Activated T-helper 2 cell treated with anti-CD3 and anti-CD28 coated beads, Interferon-gamma antibody, Interleukin-2, Interleukin-4, amounts not matched to agents 10 μg/mL and 5 μg/mL and 100 μg/mL, durations not matched to agents 14 hours and 24 hours and 36 hours (primary cell): ENCODE measurements at regions of chr6 and their contacts with region 1.

Region 1: DNA sequence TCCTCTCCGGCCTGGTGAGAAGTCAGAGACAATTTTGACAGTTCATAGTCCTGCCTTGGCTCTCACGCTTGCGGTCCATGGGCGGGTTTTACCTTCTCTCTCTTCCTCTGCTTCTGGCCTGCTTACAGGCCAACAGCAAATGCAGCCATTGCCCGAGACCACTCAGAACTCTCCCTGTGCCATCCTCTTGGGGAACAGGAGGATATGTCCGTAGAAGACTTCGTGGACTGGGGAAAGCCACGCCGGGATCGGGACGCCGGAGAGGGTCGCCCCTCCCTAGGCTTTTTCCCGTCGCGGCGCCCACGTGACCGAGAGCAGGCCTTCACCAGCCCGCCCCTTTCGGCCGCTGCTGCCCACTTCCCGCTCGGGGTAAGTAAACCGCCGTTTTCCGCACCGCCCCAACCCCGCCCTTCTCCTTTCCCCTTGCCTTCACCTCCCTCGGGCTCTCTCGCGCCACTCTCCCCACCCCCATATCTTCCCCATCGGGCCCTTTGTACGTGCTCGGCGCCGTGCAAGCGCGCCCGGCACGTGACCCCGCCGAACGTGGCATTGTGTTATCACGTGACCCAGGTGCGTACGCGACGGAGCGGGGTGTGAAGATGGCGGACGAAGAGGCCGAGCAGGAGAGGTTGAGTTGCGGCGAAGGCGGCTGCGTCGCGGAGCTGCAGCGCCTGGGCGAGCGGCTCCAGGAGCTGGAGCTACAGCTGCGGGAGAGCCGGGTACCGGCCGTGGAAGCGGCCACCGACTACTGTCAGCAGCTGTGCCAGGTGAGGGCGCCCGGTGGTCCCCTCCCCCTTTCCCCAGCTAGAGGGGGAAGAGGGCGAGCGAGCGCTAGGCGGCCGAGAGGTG is at the start of gene ZNF292:
- DNase-seq: peak; percentile 98
- H3K4me3 Mint-ChIP-seq: peak within 1 kb of the TSS; percentile 93
- H3K27ac Mint-ChIP-seq: peak within 1 kb of the TSS; percentile 99
- H3K4me1 Mint-ChIP-seq: peaks cover 41% of the 10 kb centered on the region
- H3K27me3 Mint-ChIP-seq: no peaks in the 10 kb centered on the region
- total RNA-seq, gene ZNF292: 56.2 and 62.7 TPM in 2 replicates

Region 2: GRCh38 chr6:87040729-87041128 is 114.5 kb before region 1 on chr6:
- intact Hi-C with region 1: no loop called
- DNase-seq: no peak
- H3K4me3 Mint-ChIP-seq: no peak overlapping the region
- H3K27ac Mint-ChIP-seq: no peak overlapping the region
- H3K4me1 Mint-ChIP-seq: no peaks in the 10 kb centered on the region
- H3K27me3 Mint-ChIP-seq: no peaks in the 10 kb centered on the region

Region 3: DNA sequence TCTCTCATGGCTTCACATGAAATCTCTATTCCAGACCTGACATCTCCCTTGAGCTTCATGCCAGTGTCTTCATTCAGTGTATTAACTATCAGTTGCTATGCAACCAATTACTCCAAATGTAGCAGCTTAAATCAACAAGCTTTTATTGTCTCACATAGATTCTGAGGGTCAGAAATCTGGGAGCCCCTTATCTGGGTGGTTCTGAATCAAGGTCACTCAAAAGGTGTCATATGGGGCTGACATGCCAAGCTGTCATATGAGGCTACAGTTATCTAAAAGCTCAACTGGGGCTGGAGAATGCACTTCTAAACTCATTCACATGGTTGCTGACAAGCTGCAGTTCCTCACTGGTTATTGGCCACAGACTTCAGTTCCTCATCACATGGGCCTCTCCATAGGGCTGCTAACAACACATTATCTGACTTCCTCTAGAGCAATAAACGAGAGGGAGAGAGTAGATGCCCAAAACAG is 53.0 kb before region 1 on chr6:
- intact Hi-C with region 1: loop called (anchors 1 kb)
- DNase-seq: no peak
- H3K4me3 Mint-ChIP-seq: no peak overlapping the region
- H3K27ac Mint-ChIP-seq: no peak overlapping the region
- H3K4me1 Mint-ChIP-seq: peaks cover 5% of the 10 kb centered on the region
- H3K27me3 Mint-ChIP-seq: peaks cover 39% of the 10 kb centered on the region

Region 4: GRCh38 chr6:87197547-87197946 is 42.3 kb after region 1 on chr6:
- intact Hi-C with region 1: loop called (anchors 1 kb)
- DNase-seq: no peak
- H3K4me3 Mint-ChIP-seq: no peak overlapping the region
- H3K27ac Mint-ChIP-seq: peak overlapping the region; percentile 28
- H3K4me1 Mint-ChIP-seq: peaks cover 58% of the 10 kb centered on the region
- H3K27me3 Mint-ChIP-seq: no peaks in the 10 kb centered on the region

Region 5: GRCh38 chr6:87322304-87323212 is 167.3 kb after region 1 on chr6 and contains the start of gene SMIM8:
- intact Hi-C with region 1: loop called (anchors 1 kb)
- DNase-seq: peak; percentile 79
- H3K4me3 Mint-ChIP-seq: peak within 1 kb of the TSS; percentile 97
- H3K27ac Mint-ChIP-seq: peak within 1 kb of the TSS; percentile 83
- H3K4me1 Mint-ChIP-seq: peaks cover 6% of the 10 kb centered on the region
- H3K27me3 Mint-ChIP-seq: peaks cover 2% of the 10 kb centered on the region
- total RNA-seq, gene SMIM8: 6.3 and 10.3 TPM in 2 replicates

Region 6: GRCh38 chr6:87589693-87590549 is 434.7 kb after region 1 on chr6 and contains the starts of genes ORC3 and RARS2:
- intact Hi-C with region 1: loop called (anchors 1 kb)
- DNase-seq: peak; percentile 94
- H3K4me3 Mint-ChIP-seq: peak within 1 kb of the TSS; percentile 95
- H3K27ac Mint-ChIP-seq: peak within 1 kb of the TSS; percentile 89
- H3K4me1 Mint-ChIP-seq: peaks cover 39% of the 10 kb centered on the region
- H3K27me3 Mint-ChIP-seq: no peaks in the 10 kb centered on the region
- total RNA-seq, gene ORC3: 31.2 and 31.9 TPM in 2 replicates
- total RNA-seq, gene RARS2: 23.3 and 23.5 TPM in 2 replicates